Ascending aorta (tissue), 2 donors: ENCODE measurements at regions of chr14 and their contacts with region 1.

Region 1: GRCh38 chr14:29724991-29725390 is 202.7 kb downstream of the PRKD1 start:
- DNase-seq: no peak
- H3K4me3 ChIP-seq: no peak overlapping the region
- H3K27ac ChIP-seq: no peak overlapping the region
- H3K4me1 ChIP-seq: peaks cover 6 to 12% of the 10 kb centered on the region in 2 donors
- H3K27me3 ChIP-seq: no peaks in the 10 kb centered on the region
- CTCF ChIP-seq: no peak

Region 2: DNA sequence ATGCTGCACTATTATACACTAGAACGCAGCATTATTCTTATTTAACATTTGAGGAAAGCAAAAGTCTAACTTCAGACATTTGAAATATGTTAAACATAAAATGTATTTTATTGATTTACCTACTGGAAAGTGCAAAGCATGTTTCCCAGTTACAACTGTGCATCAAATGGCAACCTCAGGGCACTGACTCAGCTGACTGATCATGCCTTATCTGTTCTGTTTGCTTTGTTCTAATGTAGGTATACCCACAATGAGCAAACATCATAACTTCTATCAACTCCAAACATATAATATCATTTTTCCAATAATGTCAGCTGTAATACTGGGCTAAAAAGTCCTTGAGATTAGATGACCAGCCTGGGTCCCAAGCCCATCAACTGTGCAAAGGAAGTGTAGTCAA is 527.4 kb before region 1 on chr14:
- intact Hi-C with region 1: no loop called
- DNase-seq: no peak
- H3K4me3 ChIP-seq: no peak overlapping the region
- H3K27ac ChIP-seq: no peak overlapping the region
- H3K4me1 ChIP-seq: no peaks in the 10 kb centered on the region
- H3K27me3 ChIP-seq: no peaks in the 10 kb centered on the region
- CTCF ChIP-seq: no peak

Region 3: DNA sequence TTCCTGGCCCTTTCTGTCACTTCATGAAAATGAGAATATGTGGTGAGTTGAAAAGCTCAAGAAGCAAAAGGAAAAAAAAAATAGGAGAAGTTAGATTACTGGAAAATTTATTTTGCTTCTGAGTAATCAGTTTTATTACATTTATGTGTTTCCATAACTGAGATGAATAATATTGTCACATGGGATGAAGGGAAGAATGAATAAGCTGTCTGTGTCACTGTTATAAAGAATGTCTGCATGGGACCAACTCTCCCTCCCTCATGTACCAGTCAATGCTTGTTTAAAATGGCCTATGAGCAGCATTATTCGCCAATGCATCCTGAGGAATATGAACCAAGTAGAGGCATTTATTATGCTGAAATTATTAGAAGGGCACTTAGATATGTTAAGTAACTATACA is 43.7 kb before region 1 on chr14:
- intact Hi-C with region 1: loop called (anchors 5 kb)
- DNase-seq: no peak
- H3K4me3 ChIP-seq: no peak overlapping the region
- H3K27ac ChIP-seq: no peak overlapping the region
- H3K4me1 ChIP-seq: peaks cover 0 to 4% of the 10 kb centered on the region in 2 donors
- H3K27me3 ChIP-seq: no peaks in the 10 kb centered on the region
- CTCF ChIP-seq: no peak